Sciatic nerve (tissue), 2 donors: ENCODE measurements at regions of chr22 and their contacts with region 1.

Region 1: DNA sequence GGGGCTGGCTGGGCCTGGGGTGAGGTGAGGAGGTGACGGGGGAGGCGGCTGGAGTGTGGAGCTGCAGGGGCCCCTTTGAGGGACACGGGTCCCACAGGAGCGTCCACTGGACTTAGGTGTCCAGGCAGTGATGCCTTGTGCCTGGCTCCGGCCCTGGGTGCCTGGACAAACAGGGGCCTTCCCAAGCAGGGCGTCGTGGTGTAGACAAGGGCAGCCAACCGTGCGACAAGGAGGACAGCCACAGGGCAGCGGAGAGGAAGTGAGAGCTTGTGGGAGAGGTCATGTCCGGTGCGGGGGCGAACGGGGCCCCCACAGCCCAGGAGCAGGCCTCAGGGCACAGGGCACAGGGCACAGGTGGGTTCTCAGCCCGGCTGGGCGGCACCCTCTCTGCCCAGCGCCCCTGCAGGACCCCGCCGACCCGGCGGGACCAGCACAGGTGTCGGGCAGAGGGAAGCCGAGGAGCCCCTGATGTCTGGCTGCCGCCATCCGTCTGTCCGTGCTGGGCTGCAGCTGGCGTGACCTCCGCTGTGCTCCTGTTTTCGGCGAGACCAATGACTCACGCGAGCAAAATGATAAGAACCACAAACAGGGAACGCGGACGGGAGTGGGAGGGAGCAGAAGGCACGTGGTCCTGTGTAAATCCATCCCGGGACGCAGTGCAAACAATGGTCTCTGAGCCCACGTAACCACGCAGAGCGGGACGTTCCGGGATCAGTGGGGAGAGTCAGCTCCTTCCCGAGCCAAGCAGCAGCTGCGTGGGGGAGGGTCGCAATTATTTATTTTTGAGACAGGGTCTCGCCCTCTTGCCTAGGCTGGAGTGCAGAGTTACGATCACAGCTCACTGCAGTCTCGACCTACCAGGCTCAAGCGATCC is 49.1 kb upstream of the A4GALT start:
- DNase-seq: no peak
- ATAC-seq: peak; percentile 79

Region 2: GRCh38 chr22:42673898-42674401 is 95.9 kb before region 1 on chr22:
- intact Hi-C with region 1: loop called (anchors 10 kb)
- DNase-seq: no peak
- ATAC-seq: peak; percentile 11

Region 3: GRCh38 chr22:42720263-42721044 is 49.4 kb before region 1 on chr22 and contains the start of gene A4GALT:
- intact Hi-C with region 1: no loop called
- DNase-seq: no peak
- ATAC-seq: peak; percentile 12
- total RNA-seq, gene A4GALT: 106 TPM